CD8-positive, alpha-beta T cell (primary cell): ENCODE measurements at regions of chr6 and their contacts with region 1.

Region 1: GRCh38 chr6:119873107-119873506 is 523.5 kb upstream of the MAN1A1 start:
- DNase-seq: no peak
- ATAC-seq: no peak
- H3K4me3 ChIP-seq: no peak overlapping the region
- H3K4me3 Mint-ChIP-seq: no peak overlapping the region
- H3K27ac ChIP-seq: no peak overlapping the region
- H3K27ac Mint-ChIP-seq: no peak overlapping the region
- H3K4me1 ChIP-seq: no peaks in the 10 kb centered on the region
- H3K4me1 Mint-ChIP-seq: no peaks in the 10 kb centered on the region
- H3K27me3 ChIP-seq: no peaks in the 10 kb centered on the region
- H3K27me3 Mint-ChIP-seq: no peaks in the 10 kb centered on the region
- CTCF ChIP-seq: no peak

Region 2: GRCh38 chr6:119856136-119856535 is 17.0 kb before region 1 on chr6:
- CTCF ChIA-PET with region 1: no interaction called
- POLR2A ChIA-PET with region 1: no interaction called
- intact Hi-C with region 1: loop called in 1 of 2 experiments (anchors 1 kb)
- DNase-seq: peak in 2 of 9 experiments; percentile 31 to 42
- ATAC-seq: peak; percentile 54
- H3K4me3 ChIP-seq: peak overlapping the region; percentile 11 to 36
- H3K4me3 Mint-ChIP-seq: peak overlapping the region; percentile 65
- H3K27ac ChIP-seq: no peak overlapping the region
- H3K27ac Mint-ChIP-seq: peak overlapping the region; percentile 3
- H3K4me1 ChIP-seq: no peaks in the 10 kb centered on the region
- H3K4me1 Mint-ChIP-seq: peaks cover 13% of the 10 kb centered on the region
- H3K27me3 ChIP-seq: no peaks in the 10 kb centered on the region
- H3K27me3 Mint-ChIP-seq: no peaks in the 10 kb centered on the region
- CTCF ChIP-seq: no peak